GM10248 (cell line): ENCODE measurements at regions of chr5 and their contacts with region 1.

Region 1: DNA sequence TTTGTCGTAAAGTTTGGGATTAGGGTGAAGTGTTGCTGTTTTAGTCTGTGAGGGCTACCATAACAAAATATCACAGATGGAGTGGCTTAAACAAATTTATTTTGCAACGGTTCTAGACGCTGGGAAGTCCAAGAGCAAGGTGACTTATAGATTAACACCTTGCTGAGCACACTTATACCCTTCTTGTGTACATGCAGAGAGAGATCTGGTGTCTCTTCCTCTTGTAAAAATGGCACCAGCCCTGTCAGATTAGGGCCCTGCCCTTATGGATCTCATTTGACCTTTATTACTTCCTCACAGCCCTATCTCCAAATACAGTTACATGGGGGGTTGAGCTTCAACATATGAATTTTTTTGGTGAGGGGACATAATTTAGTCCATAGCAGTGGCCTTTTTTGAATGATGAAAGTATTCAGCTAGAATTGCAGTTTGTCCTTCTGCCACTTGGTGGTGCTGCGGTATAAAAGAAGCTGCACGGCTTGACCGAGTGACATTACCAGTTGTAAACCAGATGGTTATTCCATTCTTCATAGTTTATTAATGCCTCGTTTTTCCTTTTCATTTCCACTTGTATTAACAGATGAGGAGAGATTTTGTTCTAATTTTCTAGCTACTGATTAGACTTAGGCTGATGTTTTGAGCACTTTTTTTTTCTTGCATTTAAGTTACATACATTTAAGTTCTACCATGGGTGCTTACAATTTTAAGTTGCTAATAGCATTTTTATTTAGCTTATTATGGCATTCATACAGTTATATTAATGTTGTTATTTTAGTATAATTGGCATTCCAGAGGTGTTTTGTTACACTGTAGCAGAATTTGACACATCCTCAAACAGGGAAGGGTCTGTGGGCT is 19.4 kb downstream of the DCP2 start:
- DNase-seq: peak; percentile 45
- CTCF ChIP-seq: peak; percentile 88

Region 2: DNA sequence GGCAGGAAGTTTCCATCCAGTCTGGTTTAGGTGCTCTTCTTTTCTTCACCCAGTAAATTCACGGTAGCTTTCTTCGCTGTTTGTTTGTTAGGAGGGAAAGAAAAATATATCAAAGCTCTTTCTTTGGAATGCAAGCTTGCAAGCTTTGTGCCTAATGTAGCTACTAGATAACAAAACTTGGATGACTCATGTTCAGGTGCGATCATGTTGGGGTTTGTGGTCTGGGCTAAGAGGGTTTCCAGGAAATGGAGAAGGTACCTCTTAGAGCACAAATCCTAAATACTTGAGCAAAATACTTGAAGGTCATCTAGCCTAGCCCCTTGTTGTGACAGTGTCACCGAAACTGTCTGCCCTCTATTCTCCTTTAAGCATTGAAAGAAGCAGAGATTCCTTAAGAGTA is 117.2 kb before region 1 on chr5:
- CTCF ChIA-PET with region 1: no interaction called
- POLR2A ChIA-PET with region 1: no interaction called
- DNase-seq: peak; percentile 16
- CTCF ChIP-seq: no peak

Region 3: DNA sequence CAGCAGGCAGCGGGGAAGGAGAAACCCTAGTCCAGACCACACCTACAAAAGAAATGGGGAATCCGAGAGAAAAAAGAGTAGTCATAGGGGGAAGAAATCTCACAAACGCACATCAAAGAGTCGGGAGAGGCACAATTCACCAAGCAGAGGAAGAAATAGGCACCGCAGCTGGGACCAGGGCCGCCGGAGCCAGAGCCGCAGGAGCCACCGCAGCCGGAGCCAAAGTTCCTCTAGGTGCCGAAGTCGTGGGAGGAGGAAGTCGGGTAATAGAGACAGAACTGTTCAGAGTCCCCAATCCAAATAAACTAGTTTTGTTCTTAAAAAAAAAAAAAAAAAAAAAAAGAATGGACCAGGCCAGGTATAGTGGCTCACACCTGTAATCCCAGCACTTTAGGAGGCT is 103.2 kb before region 1 on chr5:
- CTCF ChIA-PET with region 1: no interaction called
- POLR2A ChIA-PET with region 1: no interaction called
- DNase-seq: no peak
- CTCF ChIP-seq: no peak

Region 4: GRCh38 chr5:112968411-112969106 is 27.4 kb before region 1 on chr5:
- CTCF ChIA-PET with region 1: interaction called, 28 read pairs
- POLR2A ChIA-PET with region 1: no interaction called
- DNase-seq: no peak
- CTCF ChIP-seq: no peak

Region 5: GRCh38 chr5:112983363-112983762 is 12.6 kb before region 1 on chr5:
- CTCF ChIA-PET with region 1: interaction called, 66 read pairs
- POLR2A ChIA-PET with region 1: no interaction called
- DNase-seq: no peak
- CTCF ChIP-seq: no peak

Region 6: DNA sequence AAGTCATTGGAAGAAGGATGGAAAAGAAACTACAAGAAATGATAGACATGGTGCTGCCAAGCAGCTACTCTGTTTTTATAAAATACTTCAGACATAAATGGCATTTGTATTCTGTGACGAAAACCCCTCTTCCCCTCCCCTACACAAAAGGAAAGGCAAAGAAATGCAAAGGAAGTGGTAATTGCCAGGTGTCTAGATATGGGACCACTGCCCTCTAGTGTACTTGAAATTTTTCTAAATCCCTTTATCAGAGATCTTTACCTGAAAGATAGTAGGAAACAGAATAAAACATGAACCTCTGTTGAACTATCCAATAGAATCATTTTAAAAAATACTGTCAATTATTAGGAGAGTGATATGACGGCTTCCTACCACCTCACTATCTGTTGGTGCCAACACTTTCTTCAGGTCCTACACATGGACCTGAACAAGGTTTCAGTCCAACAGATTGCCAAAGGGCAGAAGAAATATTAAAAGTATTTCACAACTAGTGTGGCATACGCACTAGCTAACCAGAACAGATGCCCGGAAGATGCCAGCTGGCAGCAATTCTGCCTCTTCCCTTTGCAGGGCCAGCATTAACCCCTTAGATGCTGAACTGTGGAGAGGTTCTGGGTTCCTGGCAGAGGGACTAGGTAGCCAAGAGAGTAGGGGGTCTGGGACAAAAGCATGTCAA is 334.7 kb after region 1 on chr5:
- CTCF ChIA-PET with region 1: interaction called, 13 read pairs
- POLR2A ChIA-PET with region 1: no interaction called
- DNase-seq: peak; percentile 31
- CTCF ChIP-seq: peak; percentile 39

Region 7: GRCh38 chr5:113480243-113480642 is 484.3 kb after region 1 on chr5:
- CTCF ChIA-PET with region 1: no interaction called
- POLR2A ChIA-PET with region 1: no interaction called
- DNase-seq: no peak
- CTCF ChIP-seq: no peak

Region 8: DNA sequence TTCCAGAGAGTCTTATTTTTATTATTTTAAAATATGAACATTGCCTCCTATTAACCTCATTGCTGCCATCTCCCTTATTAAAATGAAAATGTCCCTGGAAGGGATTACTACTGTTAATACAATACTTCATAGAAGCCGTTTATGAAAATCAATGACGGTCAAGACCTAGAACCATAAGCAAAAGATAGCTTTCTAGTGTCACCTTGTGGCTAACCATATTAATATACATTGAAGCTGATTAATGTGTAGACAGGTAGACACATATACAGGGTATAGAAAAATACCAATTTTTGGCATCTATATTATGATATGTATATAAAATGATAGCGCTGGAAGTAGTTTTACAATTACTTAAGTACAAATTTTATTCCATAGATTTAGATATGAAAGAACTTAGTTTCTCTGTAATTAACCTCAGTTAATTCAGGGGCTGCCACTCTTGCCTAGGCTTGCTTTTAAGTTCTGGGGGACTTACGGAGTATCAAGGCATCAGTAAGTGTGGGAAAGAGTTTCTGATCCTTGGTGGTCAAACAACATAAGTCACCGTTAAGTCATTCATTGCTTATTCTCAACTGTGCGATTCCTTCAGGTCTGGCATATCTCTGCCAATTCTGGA is 515.0 kb after region 1 on chr5:
- CTCF ChIA-PET with region 1: interaction called, 23 read pairs
- POLR2A ChIA-PET with region 1: no interaction called
- DNase-seq: peak; percentile 29
- CTCF ChIP-seq: peak; percentile 49